Naive thymus-derived CD4-positive, alpha-beta T cell (primary cell): ENCODE measurements at regions of chr1 and their contacts with region 1.

Region 1: GRCh38 chr1:101066260-101066936 is 40.8 kb upstream of the DPH5 start:
- DNase-seq: peak in 2 of 9 donors; percentile 1 to 21
- ATAC-seq: peak; percentile 14
- H3K4me3 ChIP-seq: no peak overlapping the region
- H3K4me3 Mint-ChIP-seq: peak overlapping the region; percentile 6 to 82 (median 38)
- H3K27ac ChIP-seq: peak overlapping the region; percentile 60
- H3K27ac Mint-ChIP-seq: peak overlapping the region; percentile 64 to 96 (median 88)
- H3K4me1 ChIP-seq: peaks cover 8 to 31% of the 10 kb centered on the region in 2 donors
- H3K4me1 Mint-ChIP-seq: peaks cover 31 to 81% (median 71%) of the 10 kb centered on the region in 7 donors
- H3K27me3 ChIP-seq: no peaks in the 10 kb centered on the region
- H3K27me3 Mint-ChIP-seq: no peaks in the 10 kb centered on the region

Region 2: DNA sequence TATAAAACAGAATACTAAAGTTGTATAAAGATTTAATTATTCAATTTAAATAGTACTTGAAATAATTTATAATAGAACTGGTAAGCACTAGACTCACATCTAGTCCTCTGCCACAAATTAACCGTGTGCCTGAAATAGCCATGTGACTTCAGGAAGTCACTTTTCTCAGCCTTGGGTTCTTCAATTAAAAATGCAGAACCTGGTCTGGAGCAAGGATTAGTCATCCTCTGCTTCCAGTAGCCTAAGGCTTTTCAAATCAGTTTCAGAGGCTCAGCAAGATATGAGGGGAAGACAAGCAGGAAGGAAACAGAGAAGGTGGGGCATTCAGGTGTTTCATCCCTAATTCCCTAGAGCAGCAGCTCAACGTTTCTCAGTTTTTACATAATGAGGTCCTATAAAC is 63.8 kb before region 1 on chr1:
- CTCF ChIA-PET with region 1: no interaction called
- POLR2A ChIA-PET with region 1: no interaction called
- intact Hi-C with region 1: no loop called
- DNase-seq: no peak
- ATAC-seq: peak; percentile 57
- H3K4me3 ChIP-seq: no peak overlapping the region
- H3K4me3 Mint-ChIP-seq: peak overlapping the region in 7 of 10 donors; percentile 5 to 60 (median 29)
- H3K27ac ChIP-seq: no peak overlapping the region
- H3K27ac Mint-ChIP-seq: peak overlapping the region in 7 of 9 donors; percentile 41 to 95 (median 85)
- H3K4me1 ChIP-seq: peaks cover 28 to 47% of the 10 kb centered on the region in 2 donors
- H3K4me1 Mint-ChIP-seq: peaks cover 42 to 74% (median 56%) of the 10 kb centered on the region in 7 donors
- H3K27me3 ChIP-seq: no peaks in the 10 kb centered on the region
- H3K27me3 Mint-ChIP-seq: no peaks in the 10 kb centered on the region

Region 3: GRCh38 chr1:101051688-101052638 is 14.4 kb before region 1 on chr1:
- CTCF ChIA-PET with region 1: interaction called, 3 read pairs
- POLR2A ChIA-PET with region 1: interaction called, 6 read pairs
- intact Hi-C with region 1: loop called in 1 of 2 experiments (anchors 1 kb)
- DNase-seq: no peak
- ATAC-seq: peak; percentile 22
- H3K4me3 ChIP-seq: no peak overlapping the region
- H3K4me3 Mint-ChIP-seq: peak overlapping the region in 3 of 10 donors; percentile 1 to 20 (median 12)
- H3K27ac ChIP-seq: no peak overlapping the region
- H3K27ac Mint-ChIP-seq: peak overlapping the region in 7 of 9 donors; percentile 0 to 74 (median 44)
- H3K4me1 ChIP-seq: no peaks in the 10 kb centered on the region
- H3K4me1 Mint-ChIP-seq: peaks cover 6 to 50% (median 32%) of the 10 kb centered on the region in 7 donors
- H3K27me3 ChIP-seq: no peaks in the 10 kb centered on the region
- H3K27me3 Mint-ChIP-seq: no peaks in the 10 kb centered on the region

Region 4: GRCh38 chr1:101190441-101190840 is 124.0 kb after region 1 on chr1:
- CTCF ChIA-PET with region 1: no interaction called
- POLR2A ChIA-PET with region 1: no interaction called
- intact Hi-C with region 1: no loop called
- DNase-seq: no peak
- ATAC-seq: no peak
- H3K4me3 ChIP-seq: no peak overlapping the region
- H3K4me3 Mint-ChIP-seq: no peak overlapping the region
- H3K27ac ChIP-seq: no peak overlapping the region
- H3K27ac Mint-ChIP-seq: no peak overlapping the region
- H3K4me1 ChIP-seq: peaks cover 0 to 2% of the 10 kb centered on the region in 2 donors
- H3K4me1 Mint-ChIP-seq: peaks cover 12 to 31% (median 16%) of the 10 kb centered on the region in 7 donors
- H3K27me3 ChIP-seq: no peaks in the 10 kb centered on the region
- H3K27me3 Mint-ChIP-seq: no peaks in the 10 kb centered on the region